ENCODE measurements at regions of chr22 and their contacts with region 1.

Region 1: GRCh38 chr22:21698430-21699329 is 32.9 kb downstream of the PPIL2 start:
- DNase-seq: peak in 3 of 4 experiments; percentile 65 to 76 (median 67)
- ATAC-seq: peak; percentile 51
- H3K4me3 ChIP-seq: no peak overlapping the region
- H3K27ac ChIP-seq: no peak overlapping the region
- H3K4me1 ChIP-seq: peaks cover 9 to 50% of the 10 kb centered on the region in 2 experiments; a peak in 4 of 5 replicates
- H3K27me3 ChIP-seq: peaks cover 21 to 23% of the 10 kb centered on the region in 2 experiments
- CTCF ChIP-seq: 0 out of 6 replicates have a peak, but pooled peaks of 1 of the 3 experiments have one; percentile 6
- EP300 ChIP-seq: no peak
- POLR2A ChIP-seq: no peak
- RAD21 ChIP-seq: peak in 1 of 2 experiments; percentile 12; a peak in 1 of 4 replicates

Region 2: GRCh38 chr22:21677606-21678443 is 20.9 kb before region 1 on chr22:
- CTCF ChIA-PET with region 1: no interaction called
- POLR2A ChIA-PET with region 1: interaction called, 52 read pairs
- in situ Hi-C with region 1: no loop called
- intact Hi-C with region 1: no loop called
- DNase-seq: peak in 1 of 4 experiments; percentile 56
- ATAC-seq: peak; percentile 11
- H3K4me3 ChIP-seq: no peak overlapping the region
- H3K27ac ChIP-seq: no peak overlapping the region
- H3K4me1 ChIP-seq: peaks cover 0 to 29% of the 10 kb centered on the region in 2 experiments; a peak in 2 of 5 replicates
- H3K27me3 ChIP-seq: no peaks in the 10 kb centered on the region
- CTCF ChIP-seq: no peak
- EP300 ChIP-seq: no peak
- POLR2A ChIP-seq: peak; percentile 68
- RAD21 ChIP-seq: no peak

Region 3: DNA sequence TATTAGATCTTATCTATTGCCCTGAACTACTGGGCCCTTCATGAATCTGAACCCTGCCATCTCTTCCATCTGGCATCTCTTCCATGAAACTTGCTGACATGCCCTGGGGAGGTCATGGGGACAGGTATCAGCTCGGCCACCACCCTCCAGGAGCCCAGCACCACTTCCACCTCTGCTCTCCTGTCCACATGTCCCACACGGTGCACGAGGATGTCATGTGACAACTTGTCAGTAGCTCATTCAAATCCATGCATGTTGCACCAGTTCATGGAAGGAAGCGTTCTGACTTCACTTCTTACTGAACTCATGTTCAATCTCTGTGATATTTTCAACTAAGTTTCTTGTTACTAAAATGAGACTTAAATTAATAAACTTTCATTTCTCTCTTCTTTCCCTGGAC is 20.3 kb after region 1 on chr22:
- CTCF ChIA-PET with region 1: no interaction called
- POLR2A ChIA-PET with region 1: interaction called, 20 read pairs
- in situ Hi-C with region 1: no loop called
- intact Hi-C with region 1: no loop called
- DNase-seq: peak in 2 of 4 experiments; percentile 61 to 63
- ATAC-seq: peak; percentile 29
- H3K4me3 ChIP-seq: no peak overlapping the region
- H3K27ac ChIP-seq: no peak overlapping the region
- H3K4me1 ChIP-seq: peaks cover 0 to 6% of the 10 kb centered on the region in 2 experiments; a peak in 3 of 5 replicates
- H3K27me3 ChIP-seq: peaks cover 31 to 56% of the 10 kb centered on the region in 2 experiments
- CTCF ChIP-seq: no peak
- EP300 ChIP-seq: no peak
- POLR2A ChIP-seq: no peak
- RAD21 ChIP-seq: no peak

Measured in K562 (cell line).